Activated CD8-positive, alpha-beta memory T cell treated with anti-CD3 and anti-CD28 coated beads, Interleukin-2, amount 10 ng/mL, durations not matched to agents 7 days and 5 days (primary cell): ENCODE measurements at regions of chr13 and their contacts with region 1.

Region 1: DNA sequence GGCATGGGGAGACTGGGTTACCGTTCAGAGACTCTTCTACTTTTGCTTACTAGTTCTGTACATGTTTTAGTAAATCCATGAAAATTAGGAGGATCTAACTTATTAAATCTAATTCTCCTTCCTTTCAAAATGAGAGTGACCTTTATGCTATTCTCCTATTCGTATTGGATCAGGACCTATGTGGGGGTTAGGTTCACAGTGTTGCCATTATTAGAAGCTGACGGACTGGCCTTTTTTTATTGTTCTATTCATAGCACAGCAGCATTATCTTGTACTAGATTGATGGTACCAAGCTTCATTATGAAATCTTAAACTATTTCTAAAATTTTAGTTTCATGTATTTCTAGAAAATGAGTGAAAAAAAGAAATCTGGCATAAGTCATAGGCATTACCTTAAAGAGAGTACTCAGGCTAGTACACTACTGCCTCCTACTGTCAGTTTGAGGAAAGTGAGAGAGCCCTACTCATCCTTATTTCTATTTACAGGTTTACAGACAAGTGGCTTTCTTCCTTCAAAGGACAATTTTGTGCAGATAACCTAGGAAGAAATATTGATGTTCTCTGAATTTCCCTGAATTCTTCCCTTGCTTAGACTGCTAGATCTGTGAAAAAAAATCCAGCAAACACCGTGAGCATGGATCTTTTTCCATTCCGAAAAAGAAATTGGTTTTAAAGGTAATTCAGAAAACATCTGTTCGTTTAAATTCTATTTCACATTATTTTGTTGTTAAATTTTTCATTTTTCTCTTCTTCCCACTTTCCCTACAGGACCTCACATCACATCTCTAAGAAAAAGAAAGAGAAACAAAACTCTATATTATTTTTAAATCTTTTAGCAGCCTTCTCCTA is 485.5 kb downstream of the DIAPH3 start:
- DNase-seq: no peak
- ATAC-seq: peak; percentile 53
- H3K4me3 Mint-ChIP-seq: no peak overlapping the region
- H3K27ac Mint-ChIP-seq: no peak overlapping the region
- H3K4me1 Mint-ChIP-seq: peaks cover 2% of the 10 kb centered on the region
- H3K27me3 Mint-ChIP-seq: no peaks in the 10 kb centered on the region

Region 2: GRCh38 chr13:59391696-59392095 is 286.5 kb before region 1 on chr13:
- CTCF ChIA-PET with region 1: interaction called, 17 read pairs
- DNase-seq: peak; percentile 79
- ATAC-seq: peak; percentile 95
- H3K4me3 Mint-ChIP-seq: no peak overlapping the region
- H3K27ac Mint-ChIP-seq: no peak overlapping the region
- H3K4me1 Mint-ChIP-seq: no peaks in the 10 kb centered on the region
- H3K27me3 Mint-ChIP-seq: peaks cover 11% of the 10 kb centered on the region

Region 3: DNA sequence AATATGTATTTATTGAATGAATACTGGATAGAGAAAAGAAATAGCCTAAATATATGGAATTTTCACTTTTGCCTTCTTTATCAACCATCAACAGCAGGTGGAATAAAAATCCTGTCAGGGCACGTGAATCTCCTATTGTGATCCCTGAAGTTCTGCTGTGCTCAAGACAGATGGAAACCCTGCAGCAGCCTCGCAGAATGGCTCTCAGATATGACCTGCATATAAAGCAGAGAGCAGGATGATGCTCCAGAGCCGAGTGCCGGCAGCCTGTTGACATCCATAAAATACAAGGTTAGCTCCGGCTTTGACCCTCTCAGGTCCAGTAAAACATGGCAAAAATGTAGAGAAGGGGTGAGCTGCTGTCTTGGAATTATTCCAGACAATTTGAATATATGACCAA is 173.8 kb before region 1 on chr13:
- CTCF ChIA-PET with region 1: no interaction called
- DNase-seq: no peak
- ATAC-seq: no peak
- H3K4me3 Mint-ChIP-seq: no peak overlapping the region
- H3K27ac Mint-ChIP-seq: no peak overlapping the region
- H3K4me1 Mint-ChIP-seq: no peaks in the 10 kb centered on the region
- H3K27me3 Mint-ChIP-seq: no peaks in the 10 kb centered on the region

Region 4: DNA sequence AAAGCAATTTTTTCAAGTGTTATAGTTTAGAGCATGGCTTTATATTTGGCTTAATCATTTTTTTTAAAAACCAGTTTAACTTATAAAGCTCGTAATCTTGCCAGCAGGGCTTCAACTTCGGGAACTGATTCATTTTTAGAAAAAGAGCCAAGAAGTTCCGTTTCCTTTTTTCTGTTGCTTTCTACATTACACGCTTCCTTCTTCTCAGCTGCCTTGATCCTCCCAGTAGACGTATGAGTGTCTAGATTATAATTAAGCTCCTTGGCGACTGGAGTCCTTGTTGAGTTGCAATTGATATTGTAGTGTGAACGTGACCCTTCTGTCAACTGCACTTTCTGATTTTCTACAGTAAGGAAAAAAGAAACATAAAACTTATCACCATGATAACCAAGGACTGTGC is 11.7 kb before region 1 on chr13:
- CTCF ChIA-PET with region 1: interaction called, 14 read pairs
- DNase-seq: no peak
- ATAC-seq: no peak
- H3K4me3 Mint-ChIP-seq: no peak overlapping the region
- H3K27ac Mint-ChIP-seq: no peak overlapping the region
- H3K4me1 Mint-ChIP-seq: no peaks in the 10 kb centered on the region
- H3K27me3 Mint-ChIP-seq: no peaks in the 10 kb centered on the region

Region 5: DNA sequence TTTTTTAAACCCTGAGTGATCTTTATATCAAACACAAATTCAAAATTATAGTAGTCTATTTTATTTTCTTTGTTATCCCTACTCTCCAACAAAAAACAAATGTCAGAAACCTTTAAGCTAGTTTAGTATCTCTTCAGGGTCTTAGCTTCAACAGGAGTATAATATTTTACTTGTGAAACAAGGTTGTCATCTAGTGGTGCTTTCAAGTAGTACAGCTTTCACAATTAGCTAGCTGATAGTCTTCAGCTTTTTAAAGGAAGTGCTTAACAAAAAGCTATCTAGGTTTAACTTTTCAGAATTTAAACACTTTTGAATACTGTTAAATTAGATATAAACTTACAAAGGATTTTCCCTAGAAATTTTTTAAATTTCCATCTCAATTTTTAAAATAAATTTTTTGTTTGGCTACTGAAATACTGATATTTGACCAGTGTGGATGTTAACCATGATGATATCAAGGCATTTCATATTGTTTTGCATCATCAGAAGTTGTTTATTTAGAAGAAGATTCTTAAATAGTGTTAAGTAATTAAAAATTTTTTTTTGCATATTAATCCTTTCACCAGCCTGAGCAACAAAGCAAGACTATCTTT is 753.0 kb after region 1 on chr13:
- CTCF ChIA-PET with region 1: interaction called, 15 read pairs
- DNase-seq: no peak
- ATAC-seq: peak; percentile 78
- H3K4me3 Mint-ChIP-seq: no peak overlapping the region
- H3K27ac Mint-ChIP-seq: no peak overlapping the region
- H3K4me1 Mint-ChIP-seq: peaks cover 34% of the 10 kb centered on the region
- H3K27me3 Mint-ChIP-seq: no peaks in the 10 kb centered on the region